Sigmoid colon (tissue), 7 donors: ENCODE measurements at regions of chr13 and their contacts with region 1.

Region 1: DNA sequence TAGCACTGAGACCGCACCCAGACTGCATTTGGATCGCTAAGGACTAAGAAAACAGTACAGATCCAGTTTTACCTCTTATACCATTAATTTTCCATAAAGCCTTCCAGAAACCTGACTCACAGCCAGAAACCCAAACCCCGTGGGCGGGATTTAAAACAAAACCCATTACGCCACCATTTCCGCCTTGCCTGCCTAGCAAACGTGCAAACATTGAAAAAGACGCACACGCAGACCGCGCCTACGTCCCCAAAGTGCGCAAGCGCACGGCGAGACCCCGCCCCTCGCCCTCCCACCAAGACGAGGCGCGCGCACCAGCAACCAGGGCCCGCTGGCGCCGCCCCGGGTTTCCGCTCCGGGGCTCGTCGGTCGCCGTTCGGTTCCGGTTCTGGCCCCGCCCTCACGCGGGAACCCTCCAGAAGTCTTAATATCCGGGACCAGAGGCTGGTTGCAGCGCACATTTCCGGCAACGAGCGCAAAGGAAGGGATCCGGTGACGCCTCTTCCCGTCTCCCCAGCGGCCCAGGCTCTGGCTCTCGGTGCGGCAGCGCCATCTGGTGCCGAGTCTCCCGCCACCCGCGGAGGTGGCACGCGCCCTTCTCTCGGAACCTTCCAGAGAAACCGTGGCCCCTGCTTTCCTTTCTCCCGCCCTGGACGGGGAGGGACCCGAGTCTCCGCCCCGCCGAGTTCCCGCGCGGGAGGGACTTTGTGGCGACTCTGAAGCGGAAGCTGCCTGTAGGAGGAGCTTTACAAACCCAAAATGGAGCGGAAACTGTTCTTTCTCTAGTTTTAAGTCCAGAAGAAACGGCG is 256.9 kb upstream of the STARD13 start:
- DNase-seq: peak; percentile 99
- H3K4me3 ChIP-seq: peak overlapping the region; percentile 34 to 54 (median 46)
- H3K27ac ChIP-seq: peak overlapping the region; percentile 91 to 96 (median 95)
- H3K4me1 ChIP-seq: peaks cover 0 to 51% (median 49%) of the 10 kb centered on the region in 4 donors
- H3K27me3 ChIP-seq: no peaks in the 10 kb centered on the region
- CTCF ChIP-seq: peak in 3 of 4 experiments; percentile 82 to 89 (median 84)
- EP300 ChIP-seq: peak; percentile 64 to 90 (median 88)
- POLR2A ChIP-seq: peak; percentile 54 to 61

Region 2: GRCh38 chr13:32586080-32586900 is 956.2 kb before region 1 on chr13 and contains the start of gene PDS5B:
- intact Hi-C with region 1: loop called (anchors 1 kb)
- DNase-seq: peak; percentile 98
- H3K4me3 ChIP-seq: peak within 1 kb of the TSS; percentile 72 to 87 (median 84)
- H3K27ac ChIP-seq: peak within 1 kb of the TSS; percentile 90 to 99 (median 93)
- H3K4me1 ChIP-seq: peaks cover 0 to 39% (median 29%) of the 10 kb centered on the region in 4 donors
- H3K27me3 ChIP-seq: no peaks in the 10 kb centered on the region
- CTCF ChIP-seq: peak; percentile 42 to 88 (median 51)
- EP300 ChIP-seq: no peak
- POLR2A ChIP-seq: peak; percentile 16 to 45
- total RNA-seq, gene PDS5B: 52.8 to 65.0 (median 59.9) TPM

Region 3: GRCh38 chr13:33204130-33204927 is 338.2 kb before region 1 on chr13:
- intact Hi-C with region 1: loop called (anchors 2 kb)
- DNase-seq: peak; percentile 96
- H3K4me3 ChIP-seq: peak overlapping the region; percentile 36 to 58 (median 51)
- H3K27ac ChIP-seq: peak overlapping the region; percentile 83 to 88 (median 84)
- H3K4me1 ChIP-seq: peaks cover 0 to 82% (median 73%) of the 10 kb centered on the region in 4 donors
- H3K27me3 ChIP-seq: no peaks in the 10 kb centered on the region
- CTCF ChIP-seq: no peak
- EP300 ChIP-seq: peak in 3 of 4 donors; percentile 2 to 53 (median 44)
- POLR2A ChIP-seq: no peak

Region 4: DNA sequence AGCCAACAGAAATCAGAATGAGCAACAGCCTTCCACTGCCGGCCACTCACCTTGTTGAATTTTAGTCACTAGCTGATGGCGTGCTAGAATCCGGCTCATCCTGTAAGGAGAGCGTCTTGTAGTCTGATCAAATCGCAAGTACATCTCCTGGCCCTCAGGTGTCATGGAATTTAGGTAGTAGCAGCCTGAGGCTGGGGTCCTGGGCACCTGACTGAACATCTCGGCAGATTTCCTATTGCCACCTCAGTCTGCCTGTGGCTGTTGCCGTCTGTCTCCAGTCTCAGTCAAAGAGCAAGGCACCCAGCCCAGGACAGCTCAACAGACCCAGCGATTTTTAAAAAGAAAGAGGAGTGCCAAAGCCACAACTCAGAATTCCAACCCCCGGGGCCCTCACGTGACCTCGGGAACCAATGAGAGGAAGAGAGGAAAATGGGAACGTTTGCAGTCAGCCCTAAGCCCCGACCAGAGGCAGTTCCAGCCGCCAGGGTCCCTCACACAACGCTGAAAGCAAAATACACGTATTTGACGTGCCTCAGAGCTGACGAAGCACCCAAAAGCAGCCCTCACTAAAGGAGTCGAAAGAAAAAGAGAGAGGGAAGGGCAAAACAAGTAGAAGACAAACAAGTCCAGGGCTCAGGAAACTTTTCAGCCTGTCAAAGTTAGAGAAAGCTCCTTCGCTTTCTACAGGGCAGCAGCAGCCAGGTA is 256.9 kb before region 1 on chr13 and contains the start of gene STARD13:
- intact Hi-C with region 1: loop called (anchors 2 kb)
- DNase-seq: peak; percentile 98
- H3K4me3 ChIP-seq: peak within 1 kb of the TSS; percentile 60 to 69 (median 62)
- H3K27ac ChIP-seq: peak within 1 kb of the TSS; percentile 89 to 94 (median 92)
- H3K4me1 ChIP-seq: peaks cover 0 to 56% (median 40%) of the 10 kb centered on the region in 4 donors
- H3K27me3 ChIP-seq: no peaks in the 10 kb centered on the region
- CTCF ChIP-seq: peak; percentile 35 to 64 (median 44)
- EP300 ChIP-seq: no peak
- POLR2A ChIP-seq: peak; percentile 89 to 90
- total RNA-seq, gene STARD13: 66.7 to 102 (median 81.8) TPM

Region 5: GRCh38 chr13:33392794-33393371 is 149.6 kb before region 1 on chr13:
- intact Hi-C with region 1: loop called (anchors 5 kb)
- DNase-seq: no peak
- H3K4me3 ChIP-seq: no peak overlapping the region
- H3K27ac ChIP-seq: peak overlapping the region; percentile 36 to 79 (median 70)
- H3K4me1 ChIP-seq: peaks cover 0 to 48% (median 30%) of the 10 kb centered on the region in 4 donors
- H3K27me3 ChIP-seq: no peaks in the 10 kb centered on the region
- CTCF ChIP-seq: no peak
- EP300 ChIP-seq: peak in 3 of 4 donors; percentile 2 to 71 (median 32)
- POLR2A ChIP-seq: no peak

Region 6: GRCh38 chr13:33690354-33690753 is 147.9 kb after region 1 on chr13:
- intact Hi-C with region 1: no loop called
- DNase-seq: no peak
- H3K4me3 ChIP-seq: no peak overlapping the region
- H3K27ac ChIP-seq: no peak overlapping the region
- H3K4me1 ChIP-seq: no peaks in the 10 kb centered on the region
- H3K27me3 ChIP-seq: no peaks in the 10 kb centered on the region
- CTCF ChIP-seq: no peak
- EP300 ChIP-seq: no peak
- POLR2A ChIP-seq: no peak